ENCODE measurements at regions of chr15 and their contacts with region 1.

Region 1: GRCh38 chr15:72155635-72156616 is 37.7 kb downstream of the SENP8 start:
- DNase-seq: peak; percentile 89
- H3K4me3 Mint-ChIP-seq: peak overlapping the region; percentile 71
- H3K27ac Mint-ChIP-seq: peak overlapping the region; percentile 53
- H3K4me1 Mint-ChIP-seq: peaks cover 21% of the 10 kb centered on the region
- H3K27me3 Mint-ChIP-seq: no peaks in the 10 kb centered on the region
- CTCF ChIP-seq: peak; percentile 82

Region 2: GRCh38 chr15:70974004-70974832 is 1181.7 kb before region 1 on chr15:
- CTCF ChIA-PET with region 1: no interaction called
- POLR2A ChIA-PET with region 1: no interaction called
- intact Hi-C with region 1: loop called (anchors 5 kb)
- DNase-seq: peak; percentile 52
- H3K4me3 Mint-ChIP-seq: no peak overlapping the region
- H3K27ac Mint-ChIP-seq: no peak overlapping the region
- H3K4me1 Mint-ChIP-seq: no peaks in the 10 kb centered on the region
- H3K27me3 Mint-ChIP-seq: no peaks in the 10 kb centered on the region
- CTCF ChIP-seq: peak; percentile 43

Region 3: GRCh38 chr15:71743861-71744382 is 412.0 kb before region 1 on chr15:
- CTCF ChIA-PET with region 1: interaction called, 15 read pairs
- POLR2A ChIA-PET with region 1: interaction called, 5 read pairs
- intact Hi-C with region 1: no loop called
- DNase-seq: peak; percentile 72
- H3K4me3 Mint-ChIP-seq: no peak overlapping the region
- H3K27ac Mint-ChIP-seq: no peak overlapping the region
- H3K4me1 Mint-ChIP-seq: peaks cover 19% of the 10 kb centered on the region
- H3K27me3 Mint-ChIP-seq: no peaks in the 10 kb centered on the region
- CTCF ChIP-seq: peak; percentile 56

Region 4: GRCh38 chr15:71780115-71780976 is 375.6 kb before region 1 on chr15:
- CTCF ChIA-PET with region 1: interaction called, 6 read pairs
- POLR2A ChIA-PET with region 1: no interaction called
- intact Hi-C with region 1: loop called (anchors 5 kb)
- DNase-seq: peak; percentile 57
- H3K4me3 Mint-ChIP-seq: no peak overlapping the region
- H3K27ac Mint-ChIP-seq: peak overlapping the region; percentile 76
- H3K4me1 Mint-ChIP-seq: peaks cover 10% of the 10 kb centered on the region
- H3K27me3 Mint-ChIP-seq: no peaks in the 10 kb centered on the region
- CTCF ChIP-seq: peak; percentile 66

Region 5: GRCh38 chr15:72168111-72168808 is 12.3 kb after region 1 on chr15:
- CTCF ChIA-PET with region 1: interaction called, 17 read pairs
- POLR2A ChIA-PET with region 1: no interaction called
- intact Hi-C with region 1: no loop called
- DNase-seq: peak; percentile 54
- H3K4me3 Mint-ChIP-seq: peak overlapping the region; percentile 46
- H3K27ac Mint-ChIP-seq: peak overlapping the region; percentile 95
- H3K4me1 Mint-ChIP-seq: peaks cover 22% of the 10 kb centered on the region
- H3K27me3 Mint-ChIP-seq: no peaks in the 10 kb centered on the region
- CTCF ChIP-seq: no peak

Measured in MCF 10A (cell line).